ENCODE measurements at regions of chr5 and their contacts with region 1.

Region 1: DNA sequence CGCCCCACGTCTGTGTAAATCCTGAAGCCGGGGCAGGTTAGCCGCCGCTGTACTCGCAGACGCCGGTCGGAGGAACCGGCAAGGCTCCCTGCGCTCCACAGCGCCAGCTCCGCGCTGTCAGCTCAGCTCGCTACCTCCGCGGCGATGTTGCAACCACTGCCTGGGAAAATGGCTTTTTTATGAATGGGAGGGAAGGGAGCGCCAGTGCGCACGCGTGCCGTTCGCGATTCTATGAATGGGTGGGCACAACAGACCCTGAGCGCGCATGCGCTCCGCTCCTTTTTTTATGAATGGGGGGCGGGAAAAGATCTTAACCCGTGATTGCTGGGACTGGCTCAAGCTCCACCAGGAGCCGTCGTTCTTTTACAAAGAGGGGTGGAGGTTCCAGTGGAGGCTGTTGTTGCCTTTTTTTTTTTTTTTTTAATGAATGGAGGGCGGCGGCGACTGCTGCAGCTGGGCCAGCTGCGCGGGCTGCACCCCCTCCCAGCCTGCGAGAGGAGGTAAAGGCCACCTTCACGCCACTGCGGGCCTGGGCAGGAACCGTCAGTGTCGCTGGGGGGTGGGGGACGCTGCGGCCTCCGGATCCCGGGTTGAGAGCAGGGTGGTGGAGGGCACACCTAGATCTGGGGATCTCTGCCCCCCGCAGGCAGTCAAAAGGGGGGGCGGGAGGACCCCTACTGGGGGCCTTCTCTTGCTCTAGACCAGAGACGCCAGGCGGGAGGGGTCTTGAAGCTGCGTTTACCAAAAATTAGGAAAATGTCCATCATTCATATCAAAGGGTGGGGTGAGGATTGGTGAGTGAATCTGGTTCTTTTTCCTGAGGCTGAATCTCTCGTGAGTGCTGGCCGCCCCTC is at the start of gene SPRY4:
- DNase-seq: peak; percentile 98
- H3K4me3 ChIP-seq: peak within 1 kb of the TSS; percentile 78 to 99 (median 79)
- H3K27ac ChIP-seq: peak within 1 kb of the TSS; percentile 81
- H3K4me1 ChIP-seq: peaks cover 42% of the 10 kb centered on the region
- H3K27me3 ChIP-seq: no peaks in the 10 kb centered on the region
- CTCF ChIP-seq: peak in 1 of 2 donors; percentile 29
- total RNA-seq, gene SPRY4: 11.5 to 40.7 TPM

Region 2: GRCh38 chr5:142167458-142167857 is 157.6 kb before region 1 on chr5:
- CTCF ChIA-PET with region 1: interaction called, 14 read pairs
- dilution Hi-C with region 1: no loop called
- in situ Hi-C with region 1: loop called in 1 of 2 experiments (anchors 25 kb)
- intact Hi-C with region 1: loop called (anchors 2 kb)
- DNase-seq: no peak
- H3K4me3 ChIP-seq: no peak overlapping the region
- H3K27ac ChIP-seq: no peak overlapping the region
- H3K4me1 ChIP-seq: peaks cover 12% of the 10 kb centered on the region
- H3K27me3 ChIP-seq: no peaks in the 10 kb centered on the region
- CTCF ChIP-seq: peak in 1 of 2 donors; percentile 23

Region 3: GRCh38 chr5:142215915-142216681 is 109.0 kb before region 1 on chr5:
- CTCF ChIA-PET with region 1: no interaction called
- dilution Hi-C with region 1: no loop called
- in situ Hi-C with region 1: no loop called
- intact Hi-C with region 1: loop called (anchors 2 kb)
- DNase-seq: peak; percentile 95
- H3K4me3 ChIP-seq: peak overlapping the region in 2 of 3 experiments; percentile 3 to 5
- H3K27ac ChIP-seq: peak overlapping the region; percentile 58
- H3K4me1 ChIP-seq: peaks cover 25% of the 10 kb centered on the region
- H3K27me3 ChIP-seq: no peaks in the 10 kb centered on the region
- CTCF ChIP-seq: peak in 1 of 2 donors; percentile 3

Region 4: DNA sequence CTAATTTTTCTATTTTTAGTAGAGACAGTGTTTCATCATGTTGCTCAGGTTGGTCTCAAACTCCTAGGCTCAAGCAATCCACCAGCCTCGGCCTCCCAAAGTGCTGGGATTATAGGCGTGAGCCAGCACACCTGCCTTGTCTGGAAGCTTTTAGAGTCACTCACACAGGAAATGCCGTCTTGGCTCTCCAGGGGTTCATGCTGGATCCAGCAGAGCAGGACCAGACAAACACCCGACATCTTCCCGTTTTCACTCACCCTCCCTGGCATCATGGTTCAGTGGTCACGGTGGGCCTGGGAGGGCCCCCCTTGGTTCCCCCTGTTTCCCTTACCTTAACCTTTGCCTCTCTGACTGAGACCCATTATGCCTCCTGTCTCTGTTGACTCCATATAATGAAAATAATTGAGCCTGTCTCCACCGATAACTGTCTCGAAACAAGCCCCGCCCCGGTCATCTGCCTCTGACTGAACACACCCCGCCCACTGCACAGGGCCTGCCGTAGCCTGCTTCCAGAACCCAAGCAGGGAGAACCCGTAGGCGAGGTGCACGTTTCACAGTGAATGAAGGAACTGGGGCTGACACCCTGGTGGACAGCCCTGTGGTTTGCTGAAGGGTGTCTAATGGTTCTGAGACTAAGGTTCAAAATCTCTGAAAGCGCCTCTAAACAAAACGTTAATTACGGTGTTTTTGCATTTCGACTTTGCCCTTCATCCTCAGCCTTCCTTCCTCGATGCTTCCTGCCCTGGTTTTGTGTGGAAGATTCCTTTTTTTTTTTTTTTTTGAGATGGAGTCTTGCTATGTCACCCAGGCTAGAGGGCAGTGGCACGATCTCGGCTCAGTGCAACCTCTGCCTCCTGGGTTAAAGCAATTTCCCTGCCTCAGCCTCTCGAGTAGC is 39.4 kb after region 1 on chr5:
- CTCF ChIA-PET with region 1: interaction called, 3 read pairs
- dilution Hi-C with region 1: no loop called
- in situ Hi-C with region 1: no loop called
- intact Hi-C with region 1: loop called (anchors 2 kb)
- DNase-seq: peak; percentile 88
- H3K4me3 ChIP-seq: peak overlapping the region; percentile 43 to 45 (median 44)
- H3K27ac ChIP-seq: peak overlapping the region; percentile 80
- H3K4me1 ChIP-seq: peaks cover 28% of the 10 kb centered on the region
- H3K27me3 ChIP-seq: no peaks in the 10 kb centered on the region
- CTCF ChIP-seq: peak in 1 of 2 donors; percentile 40

Region 5: DNA sequence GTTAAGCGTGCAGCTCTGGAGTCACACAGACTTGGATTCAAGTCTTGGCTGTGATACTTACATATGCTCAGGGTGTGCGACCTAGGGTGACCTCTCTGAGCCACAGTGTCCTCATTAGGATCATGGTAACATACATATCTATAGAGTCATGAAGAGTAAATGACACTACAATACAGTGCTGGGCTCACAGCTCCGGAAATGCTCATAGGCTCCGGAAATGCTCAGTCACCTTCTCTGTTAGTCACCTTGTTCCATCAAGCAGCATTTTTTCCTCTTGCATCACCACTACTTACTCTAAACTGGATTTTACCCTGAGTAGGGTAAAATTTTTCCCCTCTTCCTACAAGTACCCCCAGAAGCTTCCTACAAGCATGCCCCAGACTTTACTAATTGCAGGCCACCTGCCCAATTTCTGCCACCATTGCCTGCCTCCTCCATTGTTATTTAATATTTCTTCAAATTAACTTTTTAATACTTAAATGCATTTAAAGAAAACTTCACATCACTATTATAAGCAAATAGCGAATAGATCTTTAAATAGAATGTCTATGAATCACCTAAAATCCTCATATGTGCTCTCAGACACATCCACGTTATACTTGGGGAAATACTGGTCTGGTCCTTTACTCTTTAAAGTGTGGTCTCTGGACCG is 147.3 kb after region 1 on chr5:
- CTCF ChIA-PET with region 1: interaction called, 3 read pairs
- dilution Hi-C with region 1: no loop called
- in situ Hi-C with region 1: no loop called
- intact Hi-C with region 1: loop called (anchors 2 kb)
- DNase-seq: peak; percentile 85
- H3K4me3 ChIP-seq: no peak overlapping the region
- H3K27ac ChIP-seq: peak overlapping the region; percentile 69
- H3K4me1 ChIP-seq: peaks cover 30% of the 10 kb centered on the region
- H3K27me3 ChIP-seq: no peaks in the 10 kb centered on the region
- CTCF ChIP-seq: no peak

Region 6: DNA sequence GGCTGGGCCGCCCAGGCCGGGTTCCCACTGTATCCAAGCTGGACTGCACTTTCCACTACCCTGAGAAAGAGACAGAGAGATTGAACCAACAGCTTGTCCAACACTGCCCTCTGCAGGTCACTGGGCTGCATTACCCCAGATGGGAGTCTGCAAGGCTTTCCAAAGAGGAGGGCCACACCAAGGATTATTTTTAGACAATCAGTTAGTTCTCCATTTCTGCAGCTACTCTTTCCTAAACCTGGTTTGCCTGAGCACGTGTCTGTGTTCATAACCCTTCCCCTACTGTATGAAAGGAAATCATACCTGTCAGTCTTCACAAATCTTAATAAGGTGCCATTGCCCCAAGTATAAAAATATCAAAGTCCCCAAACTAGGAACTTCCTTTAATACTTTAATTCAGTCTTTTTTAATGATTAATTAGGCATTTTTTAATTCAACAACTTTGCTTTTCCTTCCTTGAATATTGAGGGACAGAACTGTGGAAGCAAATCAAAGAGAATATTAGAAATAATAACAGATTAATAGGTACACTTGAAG is 374.2 kb after region 1 on chr5:
- CTCF ChIA-PET with region 1: no interaction called
- dilution Hi-C with region 1: no loop called
- in situ Hi-C with region 1: no loop called
- intact Hi-C with region 1: loop called (anchors 5 kb)
- DNase-seq: peak; percentile 68
- H3K4me3 ChIP-seq: no peak overlapping the region
- H3K27ac ChIP-seq: no peak overlapping the region
- H3K4me1 ChIP-seq: peaks cover 10% of the 10 kb centered on the region
- H3K27me3 ChIP-seq: no peaks in the 10 kb centered on the region
- CTCF ChIP-seq: peak; percentile 98 to 99